ENCODE measurements at regions of chr2 and their contacts with region 1.

Region 1: DNA sequence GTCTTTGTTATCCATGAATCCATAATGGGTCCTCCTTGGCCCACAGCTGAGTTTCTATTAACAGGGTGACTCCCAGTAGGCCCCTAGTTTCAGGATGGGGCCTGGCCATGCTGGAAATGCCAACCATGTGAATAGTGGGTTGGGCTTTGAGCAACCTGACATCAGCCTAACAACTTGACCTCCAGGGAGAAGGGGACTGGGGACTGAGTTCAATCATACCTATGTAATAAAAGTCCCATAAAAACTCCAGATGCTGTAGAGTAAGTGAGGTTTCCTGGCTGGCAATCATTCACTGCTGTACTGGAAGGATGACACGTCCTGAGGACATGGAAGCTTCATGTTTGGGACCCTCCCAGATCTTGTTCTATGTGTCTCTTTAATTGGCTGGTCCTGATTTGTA is 7.9 kb downstream of the REV1 start:
- DNase-seq: no peak
- ATAC-seq: peak; percentile 14 to 56 (median 34)
- H3K4me3 ChIP-seq: no peak overlapping the region
- H3K27ac ChIP-seq: no peak overlapping the region
- H3K4me1 ChIP-seq: peaks cover 67% of the 10 kb centered on the region
- H3K27me3 ChIP-seq: no peaks in the 10 kb centered on the region
- CTCF ChIP-seq: no peak

Region 2: GRCh38 chr2:99420751-99421299 is 61.1 kb before region 1 on chr2:
- intact Hi-C with region 1: loop called in 1 of 2 experiments (anchors 5 kb)
- DNase-seq: no peak
- ATAC-seq: peak in 2 of 4 donors; percentile 32 to 48
- H3K4me3 ChIP-seq: no peak overlapping the region
- H3K27ac ChIP-seq: no peak overlapping the region
- H3K4me1 ChIP-seq: peaks cover 16% of the 10 kb centered on the region
- H3K27me3 ChIP-seq: no peaks in the 10 kb centered on the region
- CTCF ChIP-seq: no peak

Region 3: DNA sequence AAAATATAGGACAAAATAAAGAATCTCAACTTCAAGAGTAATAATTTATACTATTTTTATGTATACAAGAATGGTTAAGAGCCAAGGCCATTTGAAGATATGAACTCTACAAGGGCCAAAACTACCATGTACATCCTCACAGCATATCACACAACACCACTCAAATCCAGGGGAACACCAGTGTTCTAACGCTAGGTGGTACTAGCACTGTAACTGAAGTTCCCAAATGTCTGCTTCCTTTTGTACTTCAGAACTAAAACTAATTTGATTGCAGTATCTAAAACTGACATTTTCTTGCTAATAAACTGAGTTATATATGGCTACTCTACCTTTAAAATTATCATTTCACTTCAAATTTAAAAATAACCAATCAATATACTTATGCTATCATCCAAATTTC is 39.1 kb before region 1 on chr2:
- intact Hi-C with region 1: loop called in 1 of 2 experiments (anchors 5 kb)
- DNase-seq: no peak
- ATAC-seq: peak in 1 of 4 donors; percentile 58
- H3K4me3 ChIP-seq: no peak overlapping the region
- H3K27ac ChIP-seq: no peak overlapping the region
- H3K4me1 ChIP-seq: peaks cover 5% of the 10 kb centered on the region
- H3K27me3 ChIP-seq: no peaks in the 10 kb centered on the region
- CTCF ChIP-seq: peak; percentile 10

Measured in psoas muscle (tissue), 8 donors.